Heart right ventricle (tissue), 16 donors: ENCODE measurements at regions of chr1 and their contacts with region 1.

Region 1: GRCh38 chr1:156500797-156501499 is 373 bp upstream of the MEF2D start:
- DNase-seq: peak; percentile 95 to 96
- ATAC-seq: peak; percentile 65 to 90 (median 80)
- H3K4me3 ChIP-seq: peak overlapping the region; percentile 71 to 100 (median 94)
- H3K27ac ChIP-seq: peak overlapping the region; percentile 97 to 100 (median 100)
- H3K4me1 ChIP-seq: peaks cover 44 to 76% (median 72%) of the 10 kb centered on the region in 9 donors
- H3K27me3 ChIP-seq: no peaks in the 10 kb centered on the region
- CTCF ChIP-seq: peak; percentile 7 to 75 (median 63)

Region 2: DNA sequence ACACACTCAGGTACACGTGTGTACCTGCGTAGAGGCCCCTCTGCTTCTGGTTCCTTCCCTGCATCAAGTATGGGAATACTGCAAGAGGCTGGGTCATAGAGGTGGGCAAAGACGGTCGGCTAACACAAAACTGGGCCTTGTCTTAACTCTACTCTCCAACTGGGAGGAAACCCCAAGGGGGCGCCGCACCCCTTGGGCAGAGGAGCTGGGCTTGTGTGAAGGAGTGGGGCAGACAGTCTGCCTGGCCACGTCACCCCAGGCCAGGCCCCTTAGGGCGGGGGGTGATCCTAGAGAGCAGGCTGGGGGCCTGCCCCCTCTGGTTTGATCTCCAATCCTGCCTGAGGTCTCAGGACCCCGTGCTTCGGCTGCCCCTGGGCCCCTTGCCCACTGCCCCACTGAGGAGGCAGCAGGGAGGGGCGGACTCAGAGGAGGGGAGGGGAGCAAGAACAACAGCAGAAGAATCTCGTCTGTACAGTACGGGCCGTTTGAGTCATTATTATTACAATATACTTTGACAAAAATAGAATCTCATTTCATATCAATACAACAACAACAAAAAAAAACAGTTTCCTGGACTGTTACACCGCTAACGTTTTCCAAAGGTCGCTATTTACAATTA is 35.1 kb before region 1 on chr1:
- intact Hi-C with region 1: loop called in 1 of 10 experiments (anchors 5 kb)
- DNase-seq: no peak
- ATAC-seq: peak in 6 of 8 donors; percentile 3 to 31 (median 8)
- H3K4me3 ChIP-seq: no peak overlapping the region
- H3K27ac ChIP-seq: peak overlapping the region; percentile 20 to 81 (median 59)
- H3K4me1 ChIP-seq: peaks cover 28 to 87% (median 56%) of the 10 kb centered on the region in 9 donors
- H3K27me3 ChIP-seq: no peaks in the 10 kb centered on the region
- CTCF ChIP-seq: peak in 4 of 9 donors; percentile 7 to 31 (median 19)

Region 3: GRCh38 chr1:156591432-156592157 is 90.6 kb after region 1 on chr1 and contains the start of gene NAXE:
- intact Hi-C with region 1: loop called in 2 of 10 experiments (anchors 5 kb)
- DNase-seq: peak; percentile 69 to 73
- ATAC-seq: peak; percentile 94 to 97 (median 96)
- H3K4me3 ChIP-seq: peak within 1 kb of the TSS; percentile 59 to 97 (median 81)
- H3K27ac ChIP-seq: peak within 1 kb of the TSS; percentile 74 to 92 (median 86)
- H3K4me1 ChIP-seq: peaks cover 3 to 19% (median 13%) of the 10 kb centered on the region in 9 donors
- H3K27me3 ChIP-seq: no peaks in the 10 kb centered on the region
- CTCF ChIP-seq: no peak
- total RNA-seq, gene NAXE: 93.1 to 134 (median 112) TPM

Region 4: DNA sequence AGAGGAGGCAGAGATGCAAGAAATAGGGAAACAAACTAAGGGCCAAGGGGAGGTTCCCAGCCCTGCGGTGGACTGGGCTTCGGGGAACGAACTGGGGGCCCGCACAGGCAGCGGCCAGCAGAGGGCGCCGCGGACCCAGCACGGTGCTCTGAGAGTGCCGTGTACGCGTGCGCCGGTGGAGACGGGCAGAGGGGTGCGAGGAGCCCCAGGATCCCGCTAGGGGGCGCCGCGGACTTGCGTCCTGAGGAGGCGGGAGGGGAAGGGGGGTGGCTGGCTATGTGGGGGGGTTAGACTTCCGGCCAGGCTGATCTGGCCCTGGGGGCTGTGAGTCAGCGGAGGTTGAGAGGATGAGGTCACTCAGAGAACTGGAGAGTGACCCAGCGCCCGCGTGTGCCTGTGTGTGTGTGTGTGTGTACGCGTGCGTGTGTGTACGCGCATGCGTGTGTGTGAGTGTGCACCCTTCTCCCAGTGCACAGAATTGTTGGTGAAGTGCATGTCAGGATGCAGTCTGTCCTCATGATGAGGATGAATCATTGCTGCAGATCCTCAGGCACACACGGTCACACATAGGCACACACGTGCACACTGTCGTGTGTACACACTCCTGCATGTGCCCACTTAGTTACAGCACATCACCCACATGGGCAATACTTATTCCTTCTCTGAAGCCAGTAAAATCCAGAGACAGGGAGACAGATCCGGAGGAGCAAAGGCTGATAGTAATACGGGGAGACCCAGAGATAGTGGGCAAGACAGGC is 159.2 kb after region 1 on chr1:
- intact Hi-C with region 1: loop called in 2 of 10 experiments (anchors 5 kb)
- DNase-seq: peak; percentile 97 to 98
- ATAC-seq: peak; percentile 82 to 91 (median 85)
- H3K4me3 ChIP-seq: peak overlapping the region in 8 of 10 donors; percentile 18 to 46 (median 39)
- H3K27ac ChIP-seq: peak overlapping the region; percentile 68 to 99 (median 96)
- H3K4me1 ChIP-seq: peaks cover 54 to 85% (median 80%) of the 10 kb centered on the region in 9 donors
- H3K27me3 ChIP-seq: peaks cover 0 to 28% (median 18%) of the 10 kb centered on the region in 7 donors
- CTCF ChIP-seq: peak; percentile 93 to 100 (median 99)